ENCODE measurements at regions of chr3 and their contacts with region 1.

Region 1: DNA sequence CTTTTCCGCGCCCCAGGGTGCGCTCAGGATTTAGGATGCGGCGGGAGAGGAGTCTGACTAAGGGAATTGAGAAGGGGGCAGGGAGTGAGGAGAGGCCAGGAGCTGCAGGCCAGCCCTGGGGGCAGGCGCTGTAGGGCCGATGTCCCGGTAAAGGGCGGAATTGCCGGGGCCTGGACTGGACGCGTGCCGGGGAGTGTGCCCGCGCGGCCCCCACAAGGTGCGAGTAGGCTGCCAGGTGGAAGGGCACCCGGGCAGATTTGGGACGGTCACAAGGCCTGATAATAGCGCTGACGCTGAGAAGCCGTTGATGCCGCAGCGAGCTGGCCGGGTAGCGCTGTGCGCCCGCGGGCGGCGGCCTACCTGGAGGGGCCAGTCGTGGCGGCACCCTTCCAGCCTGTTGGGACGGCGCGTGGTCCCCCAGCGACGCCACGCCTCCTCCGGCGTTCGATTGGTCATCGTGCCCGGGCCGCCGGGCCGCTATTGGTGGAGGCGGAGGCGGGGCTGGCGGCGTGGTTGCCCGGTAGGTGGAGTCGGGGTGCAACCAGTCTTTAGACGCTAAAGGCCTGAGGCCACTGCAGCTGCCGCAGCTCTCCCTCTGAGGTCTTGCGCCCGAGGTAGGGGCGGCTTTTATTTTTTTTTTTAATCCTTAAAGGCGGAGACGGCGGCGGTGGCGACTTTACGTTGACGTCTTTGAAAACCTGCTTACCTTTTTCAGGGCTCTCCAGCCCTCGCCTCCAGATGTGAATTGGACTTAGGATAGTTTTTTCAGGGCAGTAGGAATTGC is 903 bp downstream of the SLC25A38 start:
- DNase-seq: peak; percentile 81 to 96
- H3K4me3 ChIP-seq: peak overlapping the region; percentile 78
- H3K27ac ChIP-seq: peak overlapping the region; percentile 76
- H3K4me1 ChIP-seq: peaks cover 18% of the 10 kb centered on the region
- H3K27me3 ChIP-seq: no peaks in the 10 kb centered on the region
- CTCF ChIP-seq: no peak

Region 2: GRCh38 chr3:39406368-39407258 is 22.5 kb after region 1 on chr3 and contains the start of gene RPSA:
- CTCF ChIA-PET with region 1: no interaction called
- POLR2A ChIA-PET with region 1: no interaction called
- intact Hi-C with region 1: loop called (anchors 1 kb)
- DNase-seq: peak; percentile 94 to 96
- H3K4me3 ChIP-seq: peak within 1 kb of the TSS; percentile 98
- H3K27ac ChIP-seq: peak within 1 kb of the TSS; percentile 94
- H3K4me1 ChIP-seq: peaks cover 24% of the 10 kb centered on the region
- H3K27me3 ChIP-seq: no peaks in the 10 kb centered on the region
- CTCF ChIP-seq: peak; percentile 28; the same call in 1 of the 2 replicates
- total RNA-seq, gene RPSA: 1,544 and 1,775 TPM in 2 replicates

Region 3: DNA sequence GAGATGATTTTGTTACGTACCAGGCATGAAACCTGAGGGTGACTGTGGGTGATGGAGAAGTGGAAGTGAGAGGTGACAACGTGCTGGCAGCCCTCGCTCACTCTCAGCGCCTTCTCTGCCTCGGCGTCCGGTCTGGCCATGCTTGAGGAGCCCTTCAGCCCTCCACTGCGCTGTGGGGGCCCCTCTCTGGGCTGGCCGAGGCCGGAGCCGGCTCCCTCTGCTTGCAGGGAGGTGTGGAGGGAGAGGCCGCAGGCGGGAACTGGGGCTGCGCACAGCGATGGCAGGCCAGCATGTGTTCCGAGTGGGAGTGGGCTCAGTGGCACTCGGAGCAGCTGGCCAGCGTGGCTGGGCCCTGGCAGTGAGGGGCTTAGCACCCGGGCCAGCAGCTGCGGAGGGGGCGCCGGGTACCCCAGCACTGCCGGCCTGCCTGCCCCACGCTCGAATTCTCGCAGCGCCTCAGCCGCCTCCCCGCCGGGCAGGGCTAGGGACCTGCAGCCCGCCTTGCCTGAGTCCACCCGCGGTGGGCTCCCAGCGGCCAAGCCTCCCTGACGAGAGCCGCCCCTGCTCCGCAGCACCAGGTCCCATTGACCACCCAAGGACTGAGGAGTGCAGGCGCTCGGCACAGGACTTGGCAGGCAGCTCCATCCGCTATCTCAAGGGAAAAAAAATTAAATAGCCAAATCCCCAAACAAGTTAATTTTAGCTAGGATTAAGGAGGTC is 395.6 kb after region 1 on chr3:
- CTCF ChIA-PET with region 1: no interaction called
- POLR2A ChIA-PET with region 1: no interaction called
- intact Hi-C with region 1: no loop called
- DNase-seq: no peak
- H3K4me3 ChIP-seq: no peak overlapping the region
- H3K27ac ChIP-seq: no peak overlapping the region
- H3K4me1 ChIP-seq: no peaks in the 10 kb centered on the region
- H3K27me3 ChIP-seq: peaks cover 48% of the 10 kb centered on the region
- CTCF ChIP-seq: no peak

Measured in PC-9 (cell line).